ENCODE measurements at regions of chr2 and their contacts with region 1.

Region 1: DNA sequence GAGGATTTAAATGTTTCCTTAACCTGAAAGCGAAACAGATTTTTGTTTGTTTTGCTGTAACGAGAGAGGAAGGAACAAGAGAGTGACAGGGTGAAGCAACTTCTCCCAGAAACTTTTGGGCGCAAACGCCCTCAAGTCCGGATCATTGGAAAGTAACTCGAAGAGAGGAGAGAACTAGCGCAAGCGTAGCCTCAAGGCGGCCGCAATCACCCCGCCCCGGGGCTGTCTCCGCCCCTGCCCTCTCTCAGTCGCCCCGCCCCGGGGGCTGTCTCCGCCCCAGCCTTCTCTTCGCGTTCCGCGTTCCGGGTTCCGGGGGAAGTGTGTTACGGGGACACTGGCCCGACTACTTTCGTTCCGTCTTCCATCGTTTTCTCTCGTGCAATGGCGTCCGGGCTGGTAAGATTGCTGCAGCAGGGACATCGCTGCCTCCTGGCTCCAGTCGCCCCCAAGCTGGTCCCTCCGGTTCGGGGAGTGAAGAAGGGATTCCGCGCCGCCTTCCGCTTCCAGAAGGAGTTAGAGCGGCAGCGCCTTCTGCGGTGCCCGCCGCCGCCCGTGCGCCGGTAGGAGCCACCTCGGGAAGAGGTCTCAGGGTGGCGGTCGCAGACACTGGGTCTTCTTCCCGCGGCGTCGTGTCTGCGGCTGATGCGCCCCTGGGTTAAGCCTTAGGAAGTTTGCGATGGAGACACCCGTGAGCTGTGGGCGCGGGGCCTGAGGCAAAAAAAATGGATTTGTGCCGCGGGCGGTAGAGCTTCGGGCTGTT is at the start of gene MRPL44:
- DNase-seq: peak; percentile 95 to 99 (median 98)
- H3K4me3 ChIP-seq: peak within 1 kb of the TSS; percentile 65 to 100 (median 92)
- H3K27ac ChIP-seq: peak within 1 kb of the TSS in 58 of 59 donors; percentile 48 to 96 (median 86)
- H3K27me3 ChIP-seq: no peaks in the 10 kb centered on the region
- CTCF ChIP-seq: peak in 49 of 56 donors; percentile 4 to 69 (median 40)
- total RNA-seq, gene MRPL44: 12.3 to 28.1 (median 20.4) TPM

Region 2: GRCh38 chr2:223727562-223727961 is 229.7 kb before region 1 on chr2:
- intact Hi-C with region 1: loop called in 1 of 2 experiments (anchors 10 kb)
- DNase-seq: peak in 1 of 10 donors; percentile 5
- H3K4me3 ChIP-seq: no peak overlapping the region
- H3K27ac ChIP-seq: no peak overlapping the region
- H3K27me3 ChIP-seq: no peaks in the 10 kb centered on the region
- CTCF ChIP-seq: peak in 52 of 56 donors; percentile 16 to 66 (median 50)